ENCODE measurements at regions of chr10 and their contacts with region 1.

Region 1: DNA sequence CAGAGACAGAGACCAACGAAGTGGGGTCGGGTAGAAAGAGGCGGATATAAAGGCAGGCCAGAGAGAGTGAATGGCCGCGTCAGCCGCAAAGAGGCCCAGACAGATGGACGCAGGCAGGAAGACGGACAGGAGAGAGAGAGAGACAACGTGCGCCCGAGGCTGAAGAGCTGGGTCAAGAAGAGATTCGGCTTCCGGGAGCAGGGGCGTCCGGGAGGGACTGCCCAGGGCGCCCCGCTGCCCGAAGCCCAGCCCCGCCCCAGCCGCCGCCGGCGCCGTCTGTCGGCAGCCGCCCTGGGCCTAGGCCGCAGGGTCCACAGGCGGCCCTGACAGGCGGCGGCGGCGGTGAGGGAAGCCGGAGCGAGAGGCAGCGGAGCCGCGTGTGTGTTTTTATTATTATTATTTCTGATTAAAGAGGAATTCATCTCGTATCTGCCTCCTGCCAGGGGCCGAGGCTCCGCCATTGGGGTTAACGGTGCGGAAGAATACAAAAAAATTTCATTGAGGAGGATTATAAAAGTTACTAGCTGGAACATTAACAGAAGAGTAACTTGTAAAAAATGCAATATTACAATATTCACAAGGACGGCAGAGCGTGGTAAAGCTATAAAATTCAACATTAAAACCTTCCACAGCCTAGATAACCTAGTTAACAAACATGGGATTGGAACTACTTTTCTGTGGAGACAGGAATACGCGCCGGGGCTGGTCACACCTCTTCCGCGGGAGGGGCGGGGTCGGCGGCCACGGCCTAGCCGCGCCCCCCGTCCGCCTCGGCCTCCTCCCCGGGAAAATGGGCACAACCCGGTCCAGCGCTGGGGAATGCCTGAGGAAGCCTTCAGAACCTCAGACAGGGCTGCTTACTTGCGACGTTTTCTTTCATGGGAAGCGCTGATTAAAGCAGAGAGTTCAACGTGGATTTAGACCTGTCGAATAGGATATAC is 29.7 kb upstream of the PAX2 start:
- DNase-seq: no peak
- H3K4me3 Mint-ChIP-seq: no peak overlapping the region
- H3K27ac Mint-ChIP-seq: peak overlapping the region; percentile 3
- H3K4me1 Mint-ChIP-seq: peaks cover 5% of the 10 kb centered on the region
- H3K27me3 Mint-ChIP-seq: peaks cover 89% of the 10 kb centered on the region

Region 2: DNA sequence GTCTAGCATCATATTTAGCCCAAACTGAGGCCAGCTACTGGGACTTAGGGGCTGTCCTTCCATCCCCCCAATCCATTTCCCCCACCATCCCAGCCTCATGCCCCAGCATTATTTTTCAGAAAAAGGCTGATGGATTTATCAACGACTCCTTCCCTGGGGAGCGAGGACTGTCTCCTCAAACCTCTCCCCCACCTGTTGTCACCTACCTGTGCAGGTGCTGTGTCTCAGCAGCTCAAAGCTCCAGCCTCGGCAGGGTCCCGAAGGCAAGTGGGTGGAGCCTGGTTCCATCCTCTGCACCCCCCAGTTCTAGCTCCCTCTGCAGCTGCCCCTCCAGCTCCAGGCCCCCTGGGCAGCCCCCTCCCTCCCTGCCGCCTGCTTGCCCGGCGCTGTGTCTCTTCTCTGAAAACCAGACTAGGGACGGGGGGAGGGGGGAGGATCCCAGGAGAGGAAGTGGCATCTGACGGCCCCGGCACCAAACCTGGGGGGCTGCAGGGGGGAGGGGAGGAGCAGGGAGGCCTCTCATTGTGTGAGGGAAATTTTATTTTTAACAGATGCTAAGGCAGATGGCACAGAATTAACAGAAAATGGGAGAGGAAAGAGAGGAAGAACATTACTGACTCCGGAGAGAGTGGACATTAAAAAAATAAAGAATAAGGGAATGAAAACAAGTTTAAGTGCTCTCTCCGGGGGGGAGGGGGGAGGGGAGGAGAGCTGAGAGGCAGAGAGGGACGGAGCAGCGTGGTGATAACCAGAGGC is 32.0 kb before region 1 on chr10:
- intact Hi-C with region 1: loop called (anchors 5 kb)
- DNase-seq: no peak
- H3K4me3 Mint-ChIP-seq: no peak overlapping the region
- H3K27ac Mint-ChIP-seq: no peak overlapping the region
- H3K4me1 Mint-ChIP-seq: no peaks in the 10 kb centered on the region
- H3K27me3 Mint-ChIP-seq: peaks cover 79% of the 10 kb centered on the region

Region 3: DNA sequence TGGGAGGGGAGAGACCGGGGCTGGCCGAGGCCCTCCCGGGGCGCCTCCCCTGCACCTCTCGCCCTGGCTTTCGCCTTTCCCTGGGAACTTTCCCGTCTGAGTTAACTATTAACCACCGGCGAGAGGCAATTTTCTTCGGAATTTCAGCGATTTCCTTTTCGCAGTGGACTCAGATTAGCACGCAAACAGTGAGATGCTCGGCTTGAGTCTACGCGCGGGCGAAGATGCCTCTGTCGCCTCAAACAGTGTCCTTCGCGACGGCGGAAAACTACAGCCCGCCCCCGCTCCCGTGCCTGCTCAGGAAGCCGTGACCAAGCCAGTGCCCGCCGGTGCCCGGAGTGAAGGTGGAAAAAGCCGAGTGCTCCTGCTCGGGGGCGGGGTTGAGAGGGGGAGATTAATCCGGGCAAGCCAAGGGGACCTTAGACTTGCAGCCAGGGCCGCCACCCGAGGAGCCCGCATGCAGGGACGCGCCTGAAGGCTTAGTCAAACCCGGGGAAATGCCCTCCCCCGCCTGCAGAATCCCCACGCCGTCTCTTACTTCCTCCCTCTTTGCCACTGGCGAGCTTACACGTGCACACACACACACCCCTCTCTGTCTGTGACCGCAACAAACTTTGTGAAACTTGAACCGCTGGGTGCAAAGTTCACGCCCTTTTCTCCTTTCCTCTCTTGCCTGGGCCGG is 15.2 kb after region 1 on chr10:
- intact Hi-C with region 1: no loop called
- DNase-seq: peak; percentile 73
- H3K4me3 Mint-ChIP-seq: peak overlapping the region; percentile 57
- H3K27ac Mint-ChIP-seq: peak overlapping the region; percentile 56
- H3K4me1 Mint-ChIP-seq: peaks cover 25% of the 10 kb centered on the region
- H3K27me3 Mint-ChIP-seq: peaks cover 88% of the 10 kb centered on the region

Measured in activated CD4-positive, alpha-beta T cell treated with anti-CD3 and anti-CD28 coated beads, Interleukin-2, amount 10 ng/mL, durations not matched to agents 24 days and 14 days (primary cell).